PC-9 (cell line): ENCODE measurements at regions of chr13 and their contacts with region 1.

Region 1: DNA sequence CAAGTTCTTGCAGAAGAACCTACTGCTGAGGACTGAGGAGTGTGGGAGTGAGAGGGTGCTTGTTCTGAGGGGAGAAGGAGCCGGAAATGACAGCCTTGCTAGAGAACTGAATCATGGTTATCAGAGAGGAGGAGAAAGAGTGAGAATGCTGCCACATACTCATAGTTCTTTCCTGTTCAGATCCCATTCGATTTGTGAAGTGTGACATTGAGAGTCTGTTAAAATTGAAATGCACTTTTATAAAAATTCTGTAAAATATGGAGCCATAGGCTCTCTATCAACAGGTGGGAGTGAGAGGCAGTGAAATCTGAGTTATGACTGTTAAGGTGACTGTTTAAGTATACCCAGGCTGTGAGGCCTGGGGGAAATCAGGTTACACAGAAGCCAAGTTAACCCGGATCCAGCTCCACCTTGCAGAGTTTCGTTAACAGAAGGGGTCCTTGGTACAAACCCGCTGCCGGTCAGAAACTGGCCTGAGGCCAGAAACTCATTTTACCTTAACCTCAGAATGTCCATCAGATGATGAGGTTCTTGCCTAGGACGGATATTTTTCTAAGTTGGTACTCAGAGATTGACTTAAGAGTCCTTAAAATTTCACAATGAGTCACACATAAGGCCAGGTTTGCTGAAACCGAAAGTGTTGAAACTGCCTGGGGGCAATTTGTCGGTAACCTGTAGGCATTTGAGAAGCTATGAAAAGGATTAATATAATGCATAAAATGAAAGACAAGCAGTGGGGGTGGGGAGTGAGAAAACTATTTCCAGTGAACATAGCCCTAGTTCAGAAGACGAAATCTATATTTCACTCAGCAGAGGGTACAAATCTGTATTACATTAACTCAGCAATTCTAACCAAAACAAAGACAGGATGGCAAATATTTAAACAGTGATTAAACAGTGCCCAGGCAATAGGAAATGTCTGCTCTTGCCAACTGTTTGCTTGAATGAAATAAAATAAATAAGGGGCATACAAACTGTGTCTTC is 350.5 kb downstream of the KCNRG start:
- DNase-seq: peak; percentile 73 to 93
- H3K4me3 ChIP-seq: peak overlapping the region; percentile 45
- H3K27ac ChIP-seq: peak overlapping the region; percentile 95
- H3K4me1 ChIP-seq: peaks cover 31% of the 10 kb centered on the region
- H3K27me3 ChIP-seq: no peaks in the 10 kb centered on the region
- CTCF ChIP-seq: no peak

Region 2: GRCh38 chr13:50275392-50276063 is 90.2 kb before region 1 on chr13:
- CTCF ChIA-PET with region 1: no interaction called
- POLR2A ChIA-PET with region 1: no interaction called
- intact Hi-C with region 1: no loop called
- DNase-seq: no peak
- H3K4me3 ChIP-seq: no peak overlapping the region
- H3K27ac ChIP-seq: no peak overlapping the region
- H3K4me1 ChIP-seq: no peaks in the 10 kb centered on the region
- H3K27me3 ChIP-seq: no peaks in the 10 kb centered on the region
- CTCF ChIP-seq: no peak

Region 3: GRCh38 chr13:50299546-50300249 is 66.0 kb before region 1 on chr13:
- CTCF ChIA-PET with region 1: no interaction called
- POLR2A ChIA-PET with region 1: no interaction called
- intact Hi-C with region 1: no loop called
- DNase-seq: no peak
- H3K4me3 ChIP-seq: no peak overlapping the region
- H3K27ac ChIP-seq: no peak overlapping the region
- H3K4me1 ChIP-seq: no peaks in the 10 kb centered on the region
- H3K27me3 ChIP-seq: no peaks in the 10 kb centered on the region
- CTCF ChIP-seq: no peak

Region 4: DNA sequence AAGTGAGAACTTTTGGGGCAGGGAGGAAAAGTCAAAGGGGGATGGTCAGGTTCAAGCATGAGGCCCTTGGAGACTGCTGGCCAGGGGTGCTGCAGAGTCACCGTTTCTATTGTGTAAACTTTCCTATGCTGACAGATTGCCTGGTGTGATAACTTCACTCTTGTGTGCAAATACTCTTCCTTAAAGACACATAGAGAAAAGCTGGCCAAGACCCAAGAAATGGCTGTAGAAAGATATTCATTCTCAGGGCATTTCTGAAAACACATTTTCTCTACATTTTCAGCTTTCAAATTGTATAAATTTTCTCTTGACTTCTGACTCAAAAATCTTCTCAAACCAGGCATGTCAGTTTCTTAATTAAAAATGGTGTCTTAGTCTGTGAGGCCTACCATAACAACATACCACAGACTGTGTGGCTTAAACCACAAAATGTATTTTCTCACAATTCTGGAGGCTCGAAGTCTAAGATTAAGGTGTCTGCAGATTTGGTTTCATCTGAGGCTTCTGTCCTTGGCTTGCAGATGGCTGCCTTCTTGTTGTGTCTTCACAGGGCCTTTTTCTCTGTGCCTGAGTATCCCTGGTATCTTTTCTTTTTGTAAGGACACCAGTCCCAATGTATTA is 46.0 kb before region 1 on chr13:
- CTCF ChIA-PET with region 1: no interaction called
- POLR2A ChIA-PET with region 1: no interaction called
- intact Hi-C with region 1: loop called (anchors 2 kb)
- DNase-seq: peak; percentile 49 to 77
- H3K4me3 ChIP-seq: no peak overlapping the region
- H3K27ac ChIP-seq: peak overlapping the region; percentile 77
- H3K4me1 ChIP-seq: peaks cover 42% of the 10 kb centered on the region
- H3K27me3 ChIP-seq: no peaks in the 10 kb centered on the region
- CTCF ChIP-seq: no peak

Region 5: DNA sequence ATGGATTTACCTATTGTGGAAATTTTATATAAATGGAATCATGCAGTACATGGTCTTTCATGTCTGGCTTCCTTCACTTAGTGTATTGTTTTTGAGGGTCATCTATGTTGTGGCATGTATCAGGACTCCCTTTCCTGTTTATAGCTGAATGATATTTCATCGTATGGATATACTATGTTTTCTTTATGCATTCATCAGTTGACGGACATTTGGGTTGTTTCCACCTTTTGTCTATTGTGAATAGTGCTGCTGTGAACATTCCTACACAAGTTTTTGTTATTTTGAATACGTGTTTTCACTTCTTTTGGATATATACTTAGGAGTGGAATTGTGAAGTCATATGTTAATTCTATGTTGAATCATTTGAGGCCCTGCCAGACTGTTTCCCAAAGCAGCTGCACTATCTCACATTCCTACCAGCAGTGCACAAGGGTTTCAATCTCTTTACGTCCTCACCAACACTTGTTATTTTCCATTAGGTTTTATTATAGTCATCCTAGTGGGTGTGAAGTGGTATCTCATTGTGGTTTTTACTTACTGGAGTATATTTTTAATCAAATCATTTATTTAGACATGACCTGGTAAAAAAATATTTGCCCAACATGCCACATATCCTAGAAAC is 215.1 kb after region 1 on chr13:
- CTCF ChIA-PET with region 1: no interaction called
- POLR2A ChIA-PET with region 1: interaction called, 10 read pairs
- intact Hi-C with region 1: no loop called
- DNase-seq: no peak
- H3K4me3 ChIP-seq: no peak overlapping the region
- H3K27ac ChIP-seq: no peak overlapping the region
- H3K4me1 ChIP-seq: no peaks in the 10 kb centered on the region
- H3K27me3 ChIP-seq: no peaks in the 10 kb centered on the region
- CTCF ChIP-seq: no peak

Region 6: DNA sequence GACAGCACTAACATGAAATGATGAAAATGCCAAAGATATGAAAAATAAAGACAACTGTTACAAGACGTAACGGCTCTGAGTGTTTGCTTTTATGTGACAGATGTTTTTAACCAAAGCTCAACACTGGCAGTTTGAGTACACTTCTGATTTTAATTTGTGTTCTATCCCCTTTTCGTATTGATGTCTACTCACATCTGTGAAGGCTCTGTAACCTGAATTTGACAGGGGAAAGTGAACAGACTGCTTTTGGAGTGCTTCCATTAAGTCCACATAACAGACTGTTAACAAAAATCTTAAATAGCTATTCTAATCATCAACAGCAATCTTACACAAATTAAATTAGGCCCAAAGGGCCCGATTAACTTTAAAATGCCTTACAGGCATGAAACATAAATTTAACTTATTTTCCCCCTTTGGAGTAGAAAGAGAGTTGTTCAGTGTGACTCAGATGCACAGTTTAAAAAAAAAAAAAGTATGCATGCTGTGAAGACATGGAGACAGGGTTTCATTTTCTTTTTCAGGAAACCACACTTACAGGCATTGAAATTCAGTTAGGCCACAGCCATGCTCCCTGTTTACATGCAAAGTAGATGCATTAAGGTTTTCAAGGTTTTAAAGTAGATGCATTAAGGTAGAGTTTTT is 527.6 kb after region 1 on chr13:
- CTCF ChIA-PET with region 1: no interaction called
- POLR2A ChIA-PET with region 1: no interaction called
- intact Hi-C with region 1: no loop called
- DNase-seq: no peak
- H3K4me3 ChIP-seq: no peak overlapping the region
- H3K27ac ChIP-seq: no peak overlapping the region
- H3K4me1 ChIP-seq: no peaks in the 10 kb centered on the region
- H3K27me3 ChIP-seq: no peaks in the 10 kb centered on the region
- CTCF ChIP-seq: no peak